HepG2 (cell line): ENCODE measurements at regions of chr1 and their contacts with region 1.

Region 1: GRCh38 chr1:113086541-113086940 is 13.5 kb downstream of the LRIG2 start:
- DNase-seq: no peak
- ATAC-seq: no peak
- H3K4me3 ChIP-seq: no peak overlapping the region
- H3K27ac ChIP-seq: no peak overlapping the region
- H3K4me1 ChIP-seq: peaks cover 6% of the 10 kb centered on the region
- H3K27me3 ChIP-seq: no peaks in the 10 kb centered on the region
- CTCF ChIP-seq: no peak
- EP300 ChIP-seq: no peak
- POLR2A ChIP-seq: no peak
- RAD21 ChIP-seq: no peak

Region 2: DNA sequence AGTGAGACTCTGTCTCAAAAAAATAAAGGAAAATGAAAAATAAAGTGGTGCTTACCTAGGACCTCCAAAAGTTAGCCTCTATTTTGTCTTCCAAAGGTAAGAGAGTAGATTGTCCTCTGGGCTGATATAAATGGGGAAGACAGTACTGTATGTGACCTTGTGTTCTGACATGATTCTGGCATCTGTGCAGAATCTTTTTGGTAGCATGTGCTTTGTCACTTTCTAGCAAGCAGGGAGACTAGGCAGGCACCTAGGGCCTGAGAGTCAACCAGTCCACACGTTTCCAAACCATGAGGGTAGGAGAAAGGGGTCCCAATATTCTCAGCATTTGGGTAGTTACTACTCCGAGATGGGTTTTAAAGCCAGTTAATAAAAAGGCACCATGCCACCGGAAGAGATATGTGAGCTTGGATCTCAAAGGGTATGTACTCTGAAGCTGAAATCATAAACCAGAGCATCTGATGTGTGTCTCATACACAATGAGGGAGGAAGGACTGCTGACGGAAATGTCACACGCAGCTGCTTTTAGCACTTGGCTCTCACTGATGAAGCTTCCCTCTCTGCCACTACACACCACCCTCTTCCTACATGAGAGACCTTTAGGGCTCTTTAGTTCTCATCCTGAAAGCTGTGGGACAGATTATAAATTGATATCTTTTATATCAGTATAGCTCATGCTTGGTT is 103.5 kb before region 1 on chr1:
- CTCF ChIA-PET with region 1: no interaction called
- POLR2A ChIA-PET with region 1: no interaction called
- in situ Hi-C with region 1: no loop called
- intact Hi-C with region 1: no loop called
- DNase-seq: no peak
- ATAC-seq: no peak
- H3K4me3 ChIP-seq: no peak overlapping the region
- H3K27ac ChIP-seq: no peak overlapping the region
- H3K4me1 ChIP-seq: peaks cover 3% of the 10 kb centered on the region; the same call in 1 of the 2 replicates
- H3K27me3 ChIP-seq: no peaks in the 10 kb centered on the region
- CTCF ChIP-seq: no peak
- EP300 ChIP-seq: no peak
- POLR2A ChIP-seq: no peak
- RAD21 ChIP-seq: no peak

Region 3: GRCh38 chr1:113031171-113031933 is 55.2 kb before region 1 on chr1:
- CTCF ChIA-PET with region 1: no interaction called
- POLR2A ChIA-PET with region 1: no interaction called
- in situ Hi-C with region 1: no loop called
- intact Hi-C with region 1: no loop called
- DNase-seq: no peak
- ATAC-seq: no peak
- H3K4me3 ChIP-seq: no peak overlapping the region
- H3K27ac ChIP-seq: no peak overlapping the region
- H3K4me1 ChIP-seq: peaks cover 60% of the 10 kb centered on the region
- H3K27me3 ChIP-seq: no peaks in the 10 kb centered on the region
- CTCF ChIP-seq: no peak
- EP300 ChIP-seq: no peak
- POLR2A ChIP-seq: no peak
- RAD21 ChIP-seq: no peak

Region 4: GRCh38 chr1:113072757-113073478 is 13.6 kb before region 1 on chr1 and contains the start of gene LRIG2:
- CTCF ChIA-PET with region 1: no interaction called
- POLR2A ChIA-PET with region 1: interaction called, 12 read pairs
- in situ Hi-C with region 1: no loop called
- intact Hi-C with region 1: no loop called
- DNase-seq: peak; percentile 91
- ATAC-seq: peak; percentile 97
- H3K4me3 ChIP-seq: peak within 1 kb of the TSS; percentile 80 to 91 (median 86)
- H3K27ac ChIP-seq: peak within 1 kb of the TSS; percentile 81
- H3K4me1 ChIP-seq: peaks cover 35% of the 10 kb centered on the region
- H3K27me3 ChIP-seq: no peaks in the 10 kb centered on the region
- CTCF ChIP-seq: peak; percentile 81
- EP300 ChIP-seq: 0 out of 4 replicates have a peak, but pooled peaks of 1 of the 2 experiments have one; percentile 10
- POLR2A ChIP-seq: peak; percentile 88 to 98
- RAD21 ChIP-seq: peak; percentile 64
- total RNA-seq, gene LRIG2: 3.3 and 8.1 TPM in 2 replicates